ENCODE measurements at regions of chr11 and their contacts with region 1.

Region 1: GRCh38 chr11:13962562-13963168 is at the start of gene SPON1:
- DNase-seq: peak; percentile 28
- H3K4me3 ChIP-seq: peak within 1 kb of the TSS; percentile 45 to 51
- H3K27ac ChIP-seq: peak within 1 kb of the TSS in 1 of 2 donors; percentile 55
- H3K4me1 ChIP-seq: peaks cover 5% of the 10 kb centered on the region
- H3K27me3 ChIP-seq: no peaks in the 10 kb centered on the region
- CTCF ChIP-seq: no peak
- POLR2A ChIP-seq: no peak
- total RNA-seq, gene SPON1: 6.9 to 7.6 TPM

Region 2: DNA sequence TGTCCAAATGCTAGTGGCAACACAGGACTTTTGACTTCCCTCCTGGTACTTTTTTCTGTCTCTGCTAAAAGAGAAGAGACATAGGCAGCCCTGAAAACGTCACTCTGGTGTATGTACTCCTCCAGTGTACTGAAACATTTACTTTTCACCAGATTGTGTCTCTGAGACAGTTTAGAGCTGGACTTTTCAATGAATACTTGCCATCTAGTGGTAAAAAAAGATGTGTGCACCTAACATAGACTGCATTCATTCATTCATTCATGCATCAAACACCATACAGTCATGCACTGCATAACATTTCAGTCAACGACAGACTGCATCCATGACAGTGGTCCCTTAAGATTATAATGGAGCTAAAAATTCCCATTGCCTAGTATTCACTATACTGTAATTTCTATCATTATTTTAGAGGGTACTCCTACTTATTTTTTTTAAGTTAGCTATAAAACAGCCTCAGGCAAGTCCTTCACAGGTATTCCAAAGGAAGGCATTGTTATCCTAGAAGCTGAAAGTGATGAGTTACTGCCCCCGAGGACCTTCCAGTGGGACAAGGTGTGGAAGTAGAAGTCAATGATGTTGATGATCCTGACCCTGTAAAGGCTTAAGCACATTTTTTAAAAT is 186.1 kb after region 1 on chr11:
- intact Hi-C with region 1: loop called (anchors 10 kb)
- DNase-seq: no peak
- H3K4me3 ChIP-seq: no peak overlapping the region
- H3K27ac ChIP-seq: no peak overlapping the region
- H3K4me1 ChIP-seq: no peaks in the 10 kb centered on the region
- H3K27me3 ChIP-seq: no peaks in the 10 kb centered on the region
- CTCF ChIP-seq: peak; percentile 43 to 59 (median 49)
- POLR2A ChIP-seq: no peak

Measured in testis (tissue), 5 donors.